Activated T-helper 1 cell treated with anti-CD3 and anti-CD28 coated beads, Interleukin-12 subunit alpha, Interleukin-12 subunit beta, Interleukin-2, Interleukin-4 antibody, amounts not matched to agents 30 ng/mL and 10 ng/mL and 1 ng/mL, durations not matched to agents 14 hours and 24 hours and 36 hours (primary cell): ENCODE measurements at regions of chr5 and their contacts with region 1.

Region 1: GRCh38 chr5:179550511-179551230 is at the start of gene RUFY1:
- DNase-seq: peak; percentile 83
- H3K4me3 Mint-ChIP-seq: peak within 1 kb of the TSS; percentile 99
- H3K27ac Mint-ChIP-seq: peak within 1 kb of the TSS; percentile 99
- H3K4me1 Mint-ChIP-seq: peaks cover 28% of the 10 kb centered on the region
- H3K27me3 Mint-ChIP-seq: peaks cover 2% of the 10 kb centered on the region
- total RNA-seq, gene RUFY1: 37.0 and 38.3 TPM in 2 replicates

Region 2: DNA sequence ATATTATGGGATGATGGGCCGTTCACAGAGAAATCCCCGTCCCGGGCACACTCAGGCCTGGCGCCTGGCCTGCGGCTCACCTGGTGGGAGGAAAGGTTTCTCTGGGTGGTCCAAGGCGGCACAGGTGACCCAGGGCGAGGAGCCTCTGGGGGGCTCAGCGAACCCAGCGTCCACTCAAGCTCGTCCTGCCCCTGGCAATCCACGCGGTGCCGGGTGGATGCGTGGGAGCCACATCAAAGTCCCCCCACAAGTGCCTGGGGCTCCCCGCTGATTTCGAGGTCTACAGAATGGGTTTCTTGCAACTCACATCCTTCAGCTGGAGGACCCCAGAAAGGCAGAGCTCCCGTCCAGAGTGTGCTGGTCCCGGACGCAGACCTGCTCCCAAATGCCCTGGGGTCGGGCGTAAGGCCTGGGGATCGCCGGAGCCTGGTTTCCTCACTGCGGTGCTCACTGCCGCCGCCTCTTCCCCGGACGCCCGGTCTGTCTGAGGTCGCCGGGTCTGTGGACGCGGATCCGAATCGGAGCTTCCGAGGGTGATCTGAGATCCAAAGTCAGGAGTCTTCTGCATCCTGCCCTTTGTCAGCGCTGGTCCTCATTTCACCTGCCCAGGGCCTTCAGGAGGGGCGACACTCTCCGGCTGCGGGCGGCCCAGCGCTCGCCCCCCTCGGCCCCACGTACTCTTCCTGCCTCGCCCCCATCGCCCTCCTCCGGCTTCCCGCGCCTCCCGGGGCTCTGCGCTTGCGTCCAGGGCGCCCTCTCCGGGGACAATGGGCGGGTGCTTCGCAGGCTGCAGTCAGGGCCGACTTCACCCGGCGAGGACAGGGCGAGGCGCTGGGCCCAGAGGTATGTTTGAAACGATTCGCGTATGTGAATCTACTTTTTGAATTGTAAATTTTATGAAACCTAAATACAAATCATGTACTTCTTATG is 20.3 kb before region 1 on chr5:
- intact Hi-C with region 1: loop called (anchors 1 kb)
- DNase-seq: peak; percentile 50
- H3K4me3 Mint-ChIP-seq: peak overlapping the region; percentile 39
- H3K27ac Mint-ChIP-seq: no peak overlapping the region
- H3K4me1 Mint-ChIP-seq: peaks cover 14% of the 10 kb centered on the region
- H3K27me3 Mint-ChIP-seq: peaks cover 6% of the 10 kb centered on the region